Activated CD8-positive, alpha-beta T cell treated with anti-CD3 and anti-CD28 coated beads, Interleukin-2, amount 10 ng/mL, durations not matched to agents 7 days and 5 days (primary cell): ENCODE measurements at regions of chr7 and their contacts with region 1.

Region 1: GRCh38 chr7:129433847-129434674 is at the start of gene STRIP2:
- DNase-seq: peak; percentile 93
- ATAC-seq: peak; percentile 97
- H3K4me3 Mint-ChIP-seq: peak within 1 kb of the TSS; percentile 88
- H3K27ac Mint-ChIP-seq: peak within 1 kb of the TSS; percentile 75
- H3K4me1 Mint-ChIP-seq: peaks cover 23% of the 10 kb centered on the region
- H3K27me3 Mint-ChIP-seq: peaks cover 28% of the 10 kb centered on the region
- total RNA-seq, gene STRIP2: 6.6 to 7.1 TPM

Region 2: GRCh38 chr7:129423700-129424618 is 10.1 kb before region 1 on chr7:
- CTCF ChIA-PET with region 1: interaction called, 13 read pairs
- POLR2A ChIA-PET with region 1: no interaction called
- DNase-seq: no peak
- ATAC-seq: no peak
- H3K4me3 Mint-ChIP-seq: no peak overlapping the region
- H3K27ac Mint-ChIP-seq: no peak overlapping the region
- H3K4me1 Mint-ChIP-seq: peaks cover 4% of the 10 kb centered on the region
- H3K27me3 Mint-ChIP-seq: no peaks in the 10 kb centered on the region